ENCODE measurements at regions of chr10 and their contacts with region 1.

Region 1: DNA sequence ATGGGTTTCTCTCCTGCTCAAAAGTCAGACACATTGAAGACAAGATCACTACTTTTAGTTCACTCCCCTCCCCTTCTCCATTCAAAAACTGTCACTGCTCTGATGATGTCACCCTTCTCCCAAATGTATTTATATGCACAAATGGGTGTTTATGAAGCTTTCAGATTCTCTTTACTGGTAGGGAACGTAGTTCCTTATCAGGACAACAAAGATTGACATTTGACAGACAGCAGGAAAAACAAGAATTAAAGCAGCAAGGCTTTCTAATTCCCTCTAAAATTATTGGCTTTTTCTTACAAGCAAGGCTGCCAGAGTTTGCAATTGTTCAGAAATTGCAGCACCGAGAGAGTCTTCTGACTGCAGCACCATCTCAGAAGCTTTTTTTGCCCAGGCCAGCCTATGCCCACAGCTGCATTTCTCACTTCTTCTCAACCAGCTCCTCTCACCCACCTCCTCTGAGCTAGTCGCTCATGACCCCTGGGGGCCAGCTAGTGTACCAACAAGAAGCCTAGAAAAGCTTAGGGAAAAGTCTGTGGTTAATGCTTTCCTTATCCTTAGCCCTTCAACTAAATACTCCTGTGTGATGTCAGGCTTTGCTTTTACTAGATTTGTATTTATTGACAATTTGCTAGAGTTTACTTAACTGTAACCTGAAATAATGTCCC is 265.1 kb downstream of the HTR7 start:
- DNase-seq: peak; percentile 68
- ATAC-seq: peak; percentile 85
- H3K4me3 ChIP-seq: no peak overlapping the region
- H3K27ac ChIP-seq: peak overlapping the region; percentile 81
- H3K4me1 ChIP-seq: peaks cover 34 to 56% of the 10 kb centered on the region in 2 experiments
- H3K27me3 ChIP-seq: no peaks in the 10 kb centered on the region
- CTCF ChIP-seq: peak; percentile 65 to 76 (median 71); a peak in 5 of 6 replicates
- POLR2A ChIP-seq: no peak
- RAD21 ChIP-seq: peak; percentile 96

Region 2: DNA sequence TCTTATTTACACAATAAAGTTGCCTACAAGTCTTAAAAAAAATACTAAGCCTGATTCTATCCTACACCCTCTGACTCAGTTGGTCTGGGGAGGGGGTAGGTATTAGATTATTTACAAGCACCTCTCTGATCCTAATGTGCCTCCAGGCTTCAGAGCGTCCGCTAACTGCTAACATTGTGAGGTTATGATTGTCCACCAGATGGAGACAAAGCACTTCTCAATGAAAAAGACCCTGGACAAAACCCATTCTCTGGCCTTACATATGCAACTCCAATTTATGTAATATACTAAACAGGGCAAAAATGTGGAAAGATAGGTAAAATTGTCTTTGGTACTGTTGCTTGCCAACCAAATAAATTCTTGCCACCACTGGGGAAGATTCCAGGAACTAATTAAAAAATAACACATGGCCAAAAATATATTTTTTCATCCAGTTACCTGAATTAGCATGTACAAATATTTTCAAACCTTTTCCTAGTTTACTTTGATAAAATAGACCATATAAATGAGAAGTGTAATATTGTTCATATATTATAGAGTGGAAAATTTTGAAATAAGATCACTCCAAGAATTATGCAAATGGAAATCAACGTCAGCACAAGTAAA is 799.0 kb before region 1 on chr10:
- CTCF ChIA-PET with region 1: interaction called, 7 read pairs
- POLR2A ChIA-PET with region 1: no interaction called
- RAD21 ChIA-PET with region 1: no interaction called
- intact Hi-C with region 1: loop called (anchors 1 kb)
- DNase-seq: peak; percentile 73
- ATAC-seq: peak; percentile 88
- H3K4me3 ChIP-seq: no peak overlapping the region
- H3K27ac ChIP-seq: peak overlapping the region; percentile 55; the same call in 1 of the 2 replicates
- H3K4me1 ChIP-seq: peaks cover 25 to 26% of the 10 kb centered on the region in 2 experiments; a peak in 3 of 4 replicates
- H3K27me3 ChIP-seq: no peaks in the 10 kb centered on the region
- CTCF ChIP-seq: peak; percentile 65 to 90 (median 84)
- POLR2A ChIP-seq: no peak
- RAD21 ChIP-seq: peak; percentile 98

Region 3: GRCh38 chr10:90087197-90088007 is 505.4 kb before region 1 on chr10:
- CTCF ChIA-PET with region 1: interaction called, 4 read pairs
- POLR2A ChIA-PET with region 1: interaction called, 4 read pairs
- RAD21 ChIA-PET with region 1: interaction called in 1 of 2 experiments, 3 read pairs
- intact Hi-C with region 1: loop called (anchors 5 kb)
- DNase-seq: peak; percentile 98
- ATAC-seq: peak; percentile 98
- H3K4me3 ChIP-seq: peak overlapping the region in 1 of 2 experiments; percentile 7; a peak in 1 of 4 replicates
- H3K27ac ChIP-seq: peak overlapping the region; percentile 88
- H3K4me1 ChIP-seq: peaks cover 49 to 54% of the 10 kb centered on the region in 2 experiments
- H3K27me3 ChIP-seq: no peaks in the 10 kb centered on the region
- CTCF ChIP-seq: no peak
- POLR2A ChIP-seq: no peak
- RAD21 ChIP-seq: peak; percentile 49

Region 4: GRCh38 chr10:90227217-90227656 is 365.5 kb before region 1 on chr10:
- CTCF ChIA-PET with region 1: no interaction called
- POLR2A ChIA-PET with region 1: no interaction called
- RAD21 ChIA-PET with region 1: no interaction called
- intact Hi-C with region 1: loop called (anchors 5 kb)
- DNase-seq: peak; percentile 99
- ATAC-seq: peak; percentile 84
- H3K4me3 ChIP-seq: no peak overlapping the region
- H3K27ac ChIP-seq: peak overlapping the region; percentile 94
- H3K4me1 ChIP-seq: peaks cover 40 to 61% of the 10 kb centered on the region in 2 experiments
- H3K27me3 ChIP-seq: no peaks in the 10 kb centered on the region
- CTCF ChIP-seq: no peak
- POLR2A ChIP-seq: no peak
- RAD21 ChIP-seq: peak; percentile 60

Region 5: GRCh38 chr10:90579602-90580242 is 13.0 kb before region 1 on chr10:
- CTCF ChIA-PET with region 1: interaction called, 13 read pairs
- POLR2A ChIA-PET with region 1: interaction called, 6 read pairs
- RAD21 ChIA-PET with region 1: no interaction called
- intact Hi-C with region 1: no loop called
- DNase-seq: peak; percentile 61
- ATAC-seq: peak; percentile 98
- H3K4me3 ChIP-seq: no peak overlapping the region
- H3K27ac ChIP-seq: peak overlapping the region; percentile 38
- H3K4me1 ChIP-seq: peaks cover 12 to 34% of the 10 kb centered on the region in 2 experiments
- H3K27me3 ChIP-seq: no peaks in the 10 kb centered on the region
- CTCF ChIP-seq: peak; percentile 45 to 60 (median 55); a peak in 5 of 6 replicates
- POLR2A ChIP-seq: no peak
- RAD21 ChIP-seq: peak; percentile 49